ENCODE measurements at regions of chr16 and their contacts with region 1.

Region 1: GRCh38 chr16:2497116-2497630 is 16.6 kb upstream of the ATP6V0C start:
- DNase-seq: no peak
- H3K4me3 ChIP-seq: no peak overlapping the region
- H3K27ac ChIP-seq: peak overlapping the region in 3 of 4 donors; percentile 19 to 72 (median 42)
- H3K4me1 ChIP-seq: peaks cover 38 to 67% (median 41%) of the 10 kb centered on the region in 3 donors
- H3K27me3 ChIP-seq: no peaks in the 10 kb centered on the region
- CTCF ChIP-seq: no peak
- POLR2A ChIP-seq: no peak

Region 2: GRCh38 chr16:2329551-2329950 is 167.6 kb before region 1 on chr16:
- intact Hi-C with region 1: no loop called
- DNase-seq: no peak
- H3K4me3 ChIP-seq: no peak overlapping the region
- H3K27ac ChIP-seq: no peak overlapping the region
- H3K4me1 ChIP-seq: no peaks in the 10 kb centered on the region
- H3K27me3 ChIP-seq: peaks cover 0 to 9% (median 0%) of the 10 kb centered on the region in 4 donors
- CTCF ChIP-seq: no peak
- POLR2A ChIP-seq: no peak

Region 3: GRCh38 chr16:2340564-2341455 is 156.4 kb before region 1 on chr16 and contains the start of gene ABCA3:
- intact Hi-C with region 1: loop called (anchors 5 kb)
- DNase-seq: peak; percentile 55
- H3K4me3 ChIP-seq: peak within 1 kb of the TSS; percentile 51 to 90 (median 64)
- H3K27ac ChIP-seq: peak within 1 kb of the TSS; percentile 18 to 64 (median 43)
- H3K4me1 ChIP-seq: peaks cover 8 to 27% (median 20%) of the 10 kb centered on the region in 3 donors
- H3K27me3 ChIP-seq: peaks cover 0 to 24% (median 0%) of the 10 kb centered on the region in 4 donors
- CTCF ChIP-seq: peak; percentile 98 to 100 (median 100)
- POLR2A ChIP-seq: peak in 1 of 4 donors; percentile 22
- total RNA-seq, gene ABCA3: 0.70 to 3.2 (median 2.7) TPM

Region 4: DNA sequence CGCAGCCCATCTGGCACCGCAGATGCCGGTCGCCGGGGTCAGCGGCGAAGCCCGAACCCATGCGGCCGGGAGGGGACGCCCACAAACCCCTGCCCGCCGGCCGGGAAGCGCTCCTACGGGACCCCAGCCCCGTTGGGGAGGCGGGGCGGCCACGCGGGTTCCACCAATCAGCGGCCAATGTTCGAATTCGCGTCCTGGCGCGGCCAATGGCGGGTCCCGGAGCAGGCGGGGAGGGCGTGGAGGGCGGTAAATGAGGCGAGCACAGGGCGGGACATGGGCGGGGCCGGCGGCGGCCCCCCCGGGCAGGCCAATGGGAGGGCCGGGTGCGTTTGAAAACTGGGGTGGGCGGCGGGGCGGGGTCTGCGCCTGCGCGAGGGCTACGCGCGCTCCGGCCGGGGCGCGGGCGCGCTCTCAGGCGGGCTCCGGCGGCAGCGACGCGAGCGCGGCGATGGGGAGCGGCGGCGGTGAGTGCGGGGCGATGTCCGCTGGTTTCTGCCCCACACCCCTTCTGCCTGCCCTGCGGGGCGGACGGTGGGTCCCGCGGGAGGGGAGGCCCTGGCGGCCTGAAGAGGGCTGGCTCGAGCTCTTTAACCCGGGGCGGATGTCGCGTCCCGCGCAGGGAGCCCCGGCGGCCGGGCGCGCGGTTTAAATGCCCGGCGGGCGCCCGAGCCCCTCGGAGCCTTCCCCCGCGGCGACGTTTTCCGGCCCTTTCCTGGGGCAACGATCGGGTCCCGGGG is 68.0 kb before region 1 on chr16 and contains the start of gene CCNF:
- intact Hi-C with region 1: loop called (anchors 10 kb)
- DNase-seq: peak; percentile 70
- H3K4me3 ChIP-seq: peak within 1 kb of the TSS; percentile 73 to 96 (median 82)
- H3K27ac ChIP-seq: peak within 1 kb of the TSS; percentile 77 to 88 (median 82)
- H3K4me1 ChIP-seq: peaks cover 9 to 29% (median 13%) of the 10 kb centered on the region in 3 donors
- H3K27me3 ChIP-seq: no peaks in the 10 kb centered on the region
- CTCF ChIP-seq: peak in 3 of 6 experiments; percentile 13 to 26 (median 26)
- POLR2A ChIP-seq: peak in 3 of 4 donors; percentile 23 to 59 (median 35)
- total RNA-seq, gene CCNF: 5.9 to 18.6 (median 10.2) TPM

Measured in esophagus squamous epithelium (tissue), 5 donors.